ENCODE measurements at regions of chr3 and their contacts with region 1.

Region 1: DNA sequence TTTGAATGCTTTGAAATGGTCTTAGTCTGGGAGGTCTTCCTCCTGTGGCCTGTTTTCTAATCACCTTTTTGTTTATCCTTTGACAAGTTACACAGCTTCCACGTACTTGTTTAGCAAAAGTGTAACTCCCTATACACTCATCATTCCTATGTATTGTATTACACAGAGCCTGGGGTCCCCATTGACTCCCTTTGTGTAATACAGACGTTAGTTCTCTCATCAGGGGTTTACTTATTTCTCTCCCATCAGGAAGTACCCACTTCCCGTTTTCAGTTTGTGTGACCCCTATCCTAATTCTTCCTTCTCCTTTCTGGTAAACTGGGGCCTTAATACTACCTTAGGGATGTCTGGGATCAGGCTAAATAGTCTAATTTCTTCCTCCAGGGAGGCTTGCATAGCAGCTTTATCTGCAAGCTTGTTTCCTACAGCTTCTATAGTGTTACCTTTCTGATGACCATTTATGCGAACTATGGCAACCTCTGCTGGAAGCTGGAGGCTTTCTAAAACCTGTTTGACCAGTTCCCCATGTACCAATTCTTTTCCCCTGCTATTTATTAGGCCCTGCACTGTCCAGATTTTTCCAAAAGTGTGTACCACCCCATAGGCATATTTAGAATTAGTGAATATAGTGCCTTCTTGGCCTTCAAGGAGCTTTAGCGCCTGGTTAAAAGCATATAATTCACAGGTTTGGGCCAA is 22.4 kb downstream of the ARL8B start:
- DNase-seq: no peak
- H3K4me3 ChIP-seq: no peak overlapping the region
- CTCF ChIP-seq: no peak
- POLR2A ChIP-seq: no peak

Region 2: DNA sequence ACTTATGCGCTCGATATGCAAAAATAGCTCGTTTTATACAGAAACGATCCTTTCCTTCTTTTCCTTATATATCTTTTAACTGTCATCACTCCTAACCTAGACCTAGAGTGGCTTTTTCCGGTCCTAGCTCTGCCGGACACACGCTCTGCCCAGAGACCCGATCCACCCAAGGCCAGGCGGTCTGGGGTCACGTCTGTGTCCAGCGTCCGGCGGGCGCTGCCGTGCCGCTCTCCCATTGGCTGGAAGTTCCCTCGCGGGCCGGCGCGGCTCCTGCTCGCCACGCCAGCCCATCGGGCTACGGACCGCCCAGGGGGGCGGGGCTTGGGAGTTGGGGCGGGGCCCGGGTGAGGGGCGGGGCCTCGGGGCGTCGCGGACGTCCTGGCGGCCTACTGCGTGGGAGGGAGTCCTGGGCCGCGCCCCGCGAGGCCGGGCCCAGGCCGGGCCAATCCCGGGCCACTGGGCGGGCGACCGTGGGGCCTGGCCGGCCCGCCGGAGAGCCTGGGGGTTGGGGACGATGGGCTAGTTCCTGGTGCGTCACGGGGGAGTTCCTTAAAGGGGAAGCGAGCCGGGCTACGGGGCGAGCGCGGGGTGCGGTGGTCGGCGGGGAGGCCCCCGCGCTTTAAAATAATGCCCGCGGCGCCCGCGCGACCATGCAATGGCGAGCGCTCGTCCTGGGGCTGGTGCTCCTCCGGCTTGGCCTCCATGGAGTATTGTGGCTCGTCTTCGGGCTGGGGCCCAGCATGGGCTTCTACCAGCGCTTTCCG is 42.9 kb after region 1 on chr3 and contains the start of gene EDEM1:
- intact Hi-C with region 1: loop called (anchors 5 kb)
- DNase-seq: peak; percentile 93 to 98
- H3K4me3 ChIP-seq: peak within 1 kb of the TSS; percentile 80
- CTCF ChIP-seq: no peak
- POLR2A ChIP-seq: peak in 1 of 2 donors; percentile 47
- total RNA-seq, gene EDEM1: 72.4 to 121 (median 88.9) TPM

Region 3: GRCh38 chr3:6785726-6786125 is 1641.3 kb after region 1 on chr3:
- intact Hi-C with region 1: no loop called
- DNase-seq: no peak
- H3K4me3 ChIP-seq: no peak overlapping the region
- CTCF ChIP-seq: no peak
- POLR2A ChIP-seq: no peak

Measured in lower leg skin (tissue), 4 donors.